ENCODE measurements at regions of chr17 and their contacts with region 1.

Region 1: DNA sequence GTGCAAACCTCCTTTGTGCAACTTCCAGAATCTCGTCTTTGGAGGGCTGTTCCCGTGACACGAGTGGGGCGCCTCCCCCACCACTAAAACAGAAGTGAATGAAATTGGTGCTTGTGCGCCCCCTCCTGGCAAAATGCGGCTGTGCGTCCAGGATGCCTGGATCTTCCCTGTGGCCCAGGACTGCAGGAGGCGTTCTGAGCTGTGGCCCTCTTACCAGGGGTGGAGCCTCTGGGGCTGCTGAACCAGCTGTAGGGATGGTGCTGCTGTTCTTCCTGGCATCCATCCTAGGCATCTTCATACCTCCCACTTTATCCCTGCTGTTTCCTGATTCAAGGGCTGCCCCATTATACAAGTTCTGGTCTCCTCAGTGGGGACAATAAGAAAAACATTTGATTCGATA is 18.5 kb upstream of the NAGLU start:
- DNase-seq: peak; percentile 82 to 86 (median 83)
- ATAC-seq: peak; percentile 57 to 74 (median 67)
- H3K4me3 ChIP-seq: no peak overlapping the region
- H3K27ac ChIP-seq: peak overlapping the region; percentile 89 to 93 (median 92)
- H3K4me1 ChIP-seq: peaks cover 0 to 44% (median 13%) of the 10 kb centered on the region in 4 donors
- H3K27me3 ChIP-seq: no peaks in the 10 kb centered on the region
- CTCF ChIP-seq: peak; percentile 89 to 99 (median 95)
- POLR2A ChIP-seq: no peak

Region 2: DNA sequence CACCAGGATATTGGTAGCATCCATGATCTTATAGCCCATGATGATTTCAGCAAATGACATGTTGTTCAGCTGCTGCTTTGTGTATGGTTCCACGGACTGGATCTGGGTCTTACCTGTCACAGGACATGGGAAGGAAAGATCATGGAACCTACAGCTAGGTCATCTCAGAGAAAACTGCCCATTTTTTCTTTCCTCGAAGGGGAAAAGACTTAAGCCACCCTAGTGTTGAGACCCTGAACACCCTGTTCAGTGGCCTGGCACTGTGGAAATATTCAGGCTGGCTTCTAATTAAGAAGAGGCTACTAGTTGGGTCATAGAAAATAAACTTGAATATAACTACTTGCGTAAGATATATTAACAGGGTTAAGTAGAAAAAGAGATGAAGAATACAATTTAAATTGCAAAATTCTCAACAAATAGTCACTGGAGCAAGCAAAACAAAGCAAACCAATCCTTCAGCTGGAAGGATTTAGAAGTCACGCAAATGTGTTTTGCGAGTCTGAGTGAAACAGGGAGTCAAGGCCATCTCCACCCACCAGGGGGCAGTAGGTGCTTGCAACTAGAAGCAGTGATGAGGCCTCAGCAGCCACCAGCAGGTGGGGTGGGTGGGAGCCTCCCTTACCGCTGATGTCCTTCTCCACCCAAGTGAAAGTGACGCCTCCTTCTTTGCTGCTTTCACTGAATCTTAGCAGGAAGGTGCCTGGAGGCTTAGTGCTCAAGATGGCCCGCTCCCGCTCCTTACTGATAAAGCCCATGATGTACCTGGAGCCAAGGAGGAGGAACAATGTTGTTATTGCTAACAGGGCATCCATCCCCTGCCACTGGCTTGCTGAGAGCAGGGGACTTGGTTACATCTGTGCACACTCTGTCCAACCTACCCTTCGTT is 194.9 kb before region 1 on chr17:
- intact Hi-C with region 1: loop called in 1 of 2 experiments (anchors 10 kb)
- DNase-seq: peak; percentile 86 to 91 (median 87)
- ATAC-seq: peak; percentile 84 to 97 (median 91)
- H3K4me3 ChIP-seq: no peak overlapping the region
- H3K27ac ChIP-seq: no peak overlapping the region
- H3K4me1 ChIP-seq: peaks cover 0 to 6% (median 0%) of the 10 kb centered on the region in 4 donors
- H3K27me3 ChIP-seq: no peaks in the 10 kb centered on the region
- CTCF ChIP-seq: peak; percentile 96 to 100 (median 100)
- POLR2A ChIP-seq: no peak

Region 3: DNA sequence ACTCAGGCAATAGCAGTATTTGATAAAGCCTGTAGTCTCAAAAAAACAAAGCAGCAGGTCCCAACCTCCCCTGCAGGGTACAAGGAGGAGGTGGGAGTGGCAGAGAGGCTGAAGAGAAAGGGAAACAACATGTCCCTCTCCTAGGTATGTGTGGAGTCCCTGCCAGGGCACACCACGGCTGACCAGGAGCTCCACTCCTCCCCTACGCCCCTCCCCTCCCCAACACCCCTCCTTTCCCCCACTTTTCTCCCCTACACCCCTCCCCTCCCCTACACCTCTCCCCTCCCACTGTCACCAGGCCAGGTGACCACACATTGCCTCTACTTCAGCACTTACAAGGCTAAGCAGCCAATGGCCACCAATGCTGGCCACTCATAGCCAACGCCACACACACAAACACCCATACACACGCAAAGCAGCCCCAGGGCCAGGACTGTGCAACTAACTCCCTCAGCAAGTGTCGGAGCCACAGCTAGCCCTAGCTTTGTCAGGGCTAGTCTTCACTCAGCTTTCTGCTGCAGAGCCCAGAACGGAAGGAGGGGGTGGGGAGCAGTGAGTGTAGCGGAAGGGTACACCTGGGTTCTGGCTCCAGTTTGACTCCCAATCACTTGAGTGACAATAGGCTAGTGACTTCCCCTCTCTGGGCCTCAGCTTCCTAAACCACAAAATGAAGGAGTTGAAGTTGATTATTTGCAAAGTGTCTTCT is 102.7 kb before region 1 on chr17:
- intact Hi-C with region 1: loop called (anchors 5 kb)
- DNase-seq: no peak
- ATAC-seq: peak in 2 of 4 donors; percentile 15 to 16
- H3K4me3 ChIP-seq: no peak overlapping the region
- H3K27ac ChIP-seq: no peak overlapping the region
- H3K4me1 ChIP-seq: no peaks in the 10 kb centered on the region
- H3K27me3 ChIP-seq: no peaks in the 10 kb centered on the region
- CTCF ChIP-seq: no peak
- POLR2A ChIP-seq: no peak

Region 4: DNA sequence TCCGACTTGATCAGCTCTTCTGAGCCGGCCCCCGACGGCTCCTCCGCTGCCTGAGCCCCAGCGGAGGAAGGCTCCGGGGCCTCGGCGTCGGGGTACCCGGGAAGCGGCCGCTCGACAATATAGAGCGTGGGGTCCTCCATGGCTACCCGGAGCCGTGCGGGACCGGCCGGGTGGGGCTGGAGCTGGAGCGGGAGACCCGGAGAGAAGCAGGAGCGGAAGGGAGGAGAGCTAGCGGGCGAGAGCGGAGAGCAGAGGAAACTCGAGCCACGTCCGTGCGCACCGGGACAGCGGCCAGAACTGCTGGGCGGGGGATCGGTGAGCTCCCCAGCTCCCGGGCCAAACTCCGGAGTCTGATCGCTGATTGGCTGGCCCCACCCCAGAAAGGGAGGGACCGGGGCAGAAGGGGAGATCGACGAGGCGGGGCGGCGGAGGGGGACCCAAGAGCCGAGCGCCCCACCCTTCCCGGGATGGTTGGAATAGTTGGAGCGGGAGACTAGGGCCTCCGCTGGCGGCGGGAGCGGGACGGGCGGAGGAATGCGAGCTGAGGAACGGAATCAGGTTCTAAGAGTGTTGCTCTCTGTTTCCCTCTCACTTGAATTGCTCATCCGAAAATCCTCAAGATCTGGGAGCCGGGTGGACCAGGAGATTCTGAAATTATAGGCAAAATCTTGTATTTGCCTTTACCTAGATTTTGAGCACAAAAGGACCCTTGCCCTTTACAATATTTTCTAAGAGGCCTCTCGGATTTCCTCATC is 94.4 kb before region 1 on chr17 and contains the start of gene CAVIN1:
- intact Hi-C with region 1: loop called (anchors 5 kb)
- DNase-seq: peak; percentile 94 to 96 (median 94)
- ATAC-seq: peak; percentile 90 to 93 (median 92)
- H3K4me3 ChIP-seq: peak within 1 kb of the TSS; percentile 55 to 59 (median 57)
- H3K27ac ChIP-seq: peak within 1 kb of the TSS; percentile 59 to 84 (median 76)
- H3K4me1 ChIP-seq: peaks cover 0 to 12% (median 2%) of the 10 kb centered on the region in 4 donors
- H3K27me3 ChIP-seq: no peaks in the 10 kb centered on the region
- CTCF ChIP-seq: no peak
- POLR2A ChIP-seq: peak; percentile 78
- total RNA-seq, gene CAVIN1: 8.7 to 29.6 (median 17.4) TPM